Gastrocnemius medialis (tissue), 4 donors: ENCODE measurements at regions of chr1 and their contacts with region 1.

Region 1: DNA sequence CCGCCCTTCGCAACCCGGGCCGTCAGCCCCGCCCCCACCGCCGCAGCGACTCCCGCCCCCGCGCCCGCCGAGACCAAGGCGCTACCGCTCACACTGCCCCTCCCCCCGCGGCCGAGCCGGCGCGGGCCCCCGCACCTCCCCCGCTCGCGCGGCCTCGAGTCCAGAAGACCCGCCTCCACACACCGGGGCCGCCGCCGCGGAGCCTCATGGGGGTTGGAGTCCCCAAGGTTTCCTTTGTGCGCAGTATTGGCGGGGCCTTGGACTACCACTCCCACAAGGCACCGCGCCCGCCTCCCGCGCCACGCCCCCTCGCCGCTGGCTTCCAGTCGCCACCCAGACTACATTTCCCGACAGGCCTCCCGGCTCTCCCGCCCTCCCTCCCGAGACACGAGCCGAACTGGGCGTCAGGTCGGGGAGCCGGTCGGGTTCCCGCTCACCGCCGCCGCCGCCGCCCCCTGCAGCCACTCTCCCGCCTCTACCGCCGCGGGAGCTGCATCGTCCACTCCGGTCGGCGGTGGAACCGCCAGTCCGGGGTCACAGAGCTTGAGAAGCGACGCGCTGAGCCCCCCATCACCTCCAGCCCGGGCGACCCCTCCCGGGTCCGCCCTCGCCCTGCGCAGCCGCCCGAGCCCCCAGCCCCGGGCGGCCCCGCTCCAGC is at the start of gene PHF13:
- DNase-seq: peak; percentile 99 to 100
- ATAC-seq: peak; percentile 81
- H3K4me3 ChIP-seq: peak within 1 kb of the TSS; percentile 90 to 100 (median 95)
- H3K27ac ChIP-seq: peak within 1 kb of the TSS; percentile 97 to 100 (median 98)
- H3K4me1 ChIP-seq: peaks cover 35 to 37% of the 10 kb centered on the region in 2 donors
- H3K27me3 ChIP-seq: no peaks in the 10 kb centered on the region
- CTCF ChIP-seq: peak in 1 of 5 experiments; percentile 11
- POLR2A ChIP-seq: peak; percentile 89
- total RNA-seq, gene PHF13: 4.7 to 8.5 (median 5.3) TPM

Region 2: DNA sequence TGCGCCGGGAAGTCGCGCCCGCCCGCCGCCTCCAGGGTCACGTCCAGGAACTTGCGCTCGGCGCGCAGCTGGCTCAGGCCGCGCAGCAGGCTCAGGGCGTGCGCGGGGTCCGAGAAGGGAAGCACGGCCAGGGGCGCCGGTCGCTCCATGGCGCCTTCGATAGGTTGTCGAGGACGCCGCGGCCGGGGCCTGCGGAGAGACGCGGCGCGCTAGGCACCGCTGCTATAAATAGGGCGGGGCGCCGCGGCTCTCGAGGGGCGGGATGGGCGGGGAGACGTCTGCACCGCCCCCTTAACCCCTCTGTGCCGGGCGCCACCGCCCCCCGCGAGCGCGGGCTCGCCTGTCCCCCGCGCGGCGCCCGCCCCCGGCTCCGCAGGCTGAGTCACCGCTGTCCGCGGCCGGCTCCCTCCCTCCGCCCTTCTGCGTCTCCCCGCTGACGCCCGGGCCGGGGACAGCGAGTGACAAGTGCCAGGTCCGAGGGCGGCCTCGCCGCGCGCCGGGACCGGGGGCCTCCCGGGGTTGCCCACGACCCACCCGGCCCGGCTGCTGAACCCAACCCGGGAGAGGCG is 10.7 kb before region 1 on chr1 and contains the start of gene KLHL21:
- in situ Hi-C with region 1: no loop called
- intact Hi-C with region 1: loop called (anchors 1 kb)
- DNase-seq: peak; percentile 89 to 93
- ATAC-seq: peak; percentile 32 to 38
- H3K4me3 ChIP-seq: peak within 1 kb of the TSS; percentile 76 to 92 (median 90)
- H3K27ac ChIP-seq: peak within 1 kb of the TSS; percentile 98 to 100 (median 100)
- H3K4me1 ChIP-seq: peaks cover 42 to 50% of the 10 kb centered on the region in 2 donors
- H3K27me3 ChIP-seq: no peaks in the 10 kb centered on the region
- CTCF ChIP-seq: no peak
- POLR2A ChIP-seq: peak; percentile 94 to 98
- total RNA-seq, gene KLHL21: 176 to 481 (median 267) TPM

Region 3: DNA sequence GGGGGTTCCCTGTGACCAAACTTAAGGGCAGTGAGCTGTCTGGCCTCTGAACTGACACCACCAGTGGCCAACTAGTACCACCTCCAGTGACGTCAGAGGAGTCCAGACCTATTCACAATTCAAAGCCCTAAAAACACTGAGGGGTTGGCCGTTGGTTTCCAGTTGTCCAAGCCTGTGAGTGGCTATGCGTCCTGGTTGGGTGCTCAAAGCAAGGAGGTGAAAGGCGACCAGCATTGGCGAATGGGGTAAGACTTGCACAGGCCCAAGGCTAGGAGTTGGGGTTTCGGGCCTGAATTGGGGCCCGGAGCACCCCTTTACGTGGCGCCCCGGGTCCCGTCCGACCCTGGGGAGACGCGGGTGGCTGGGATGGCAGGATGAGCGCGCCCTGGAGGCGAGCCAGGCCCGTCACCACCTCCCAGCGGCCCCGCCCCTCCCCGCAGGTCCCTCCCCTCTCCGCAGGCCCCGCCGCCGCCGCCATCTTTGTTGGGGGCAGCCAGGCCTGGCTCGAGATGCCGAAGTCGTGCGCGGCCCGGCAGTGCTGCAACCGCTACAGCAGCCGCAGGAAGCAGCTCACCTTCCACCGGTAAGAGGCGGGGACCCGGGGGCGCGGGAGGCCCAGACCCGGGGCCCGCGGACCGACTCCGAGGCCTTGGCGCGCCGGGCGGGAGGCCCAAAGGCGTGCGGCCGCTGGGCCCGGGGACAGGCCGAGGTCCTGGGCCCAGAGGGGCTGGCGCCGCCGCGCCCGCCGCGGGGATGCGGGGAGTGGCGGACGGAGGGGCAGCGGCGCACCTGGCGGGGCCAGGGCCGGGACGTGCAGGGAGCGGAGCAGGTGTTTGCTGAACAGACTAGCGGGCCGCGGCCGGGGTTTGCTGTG is 11.5 kb after region 1 on chr1 and contains the start of gene THAP3:
- in situ Hi-C with region 1: no loop called
- intact Hi-C with region 1: loop called (anchors 1 kb)
- DNase-seq: peak; percentile 75 to 83
- ATAC-seq: peak; percentile 81 to 89
- H3K4me3 ChIP-seq: peak within 1 kb of the TSS; percentile 68 to 83 (median 72)
- H3K27ac ChIP-seq: peak within 1 kb of the TSS; percentile 80 to 92 (median 90)
- H3K4me1 ChIP-seq: peaks cover 22 to 24% of the 10 kb centered on the region in 2 donors
- H3K27me3 ChIP-seq: no peaks in the 10 kb centered on the region
- CTCF ChIP-seq: peak in 1 of 5 experiments; percentile 22
- POLR2A ChIP-seq: peak; percentile 37 to 46
- total RNA-seq, gene THAP3: 16.7 to 31.0 (median 24.2) TPM